CD4-positive, alpha-beta T cell (primary cell): ENCODE measurements at regions of chr10 and their contacts with region 1.

Region 1: DNA sequence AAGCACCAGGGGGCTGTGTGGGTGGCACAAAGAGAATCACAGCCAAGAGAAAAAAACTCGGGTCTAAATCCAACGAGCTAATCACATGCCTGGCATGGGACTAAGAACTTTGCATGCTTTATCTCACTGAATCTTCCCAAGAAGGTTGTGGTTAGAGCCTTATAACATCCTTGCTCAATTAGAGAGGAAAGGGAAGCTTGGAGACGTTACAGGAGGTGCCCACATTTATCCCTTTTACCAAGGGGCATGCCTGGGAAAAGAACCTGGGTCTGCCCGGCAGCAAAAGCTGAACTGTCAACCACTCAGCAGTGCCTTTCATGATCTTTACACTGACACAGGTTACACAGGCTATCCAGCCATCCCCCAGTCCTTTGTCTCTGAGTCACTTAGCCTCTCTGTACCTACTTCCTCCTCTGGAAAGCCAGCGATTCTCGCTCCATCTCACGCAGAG is 190.1 kb downstream of the PRPF18 start:
- DNase-seq: peak in 1 of 14 experiments; percentile 28
- ATAC-seq: no peak
- H3K4me3 ChIP-seq: no peak overlapping the region
- H3K4me3 Mint-ChIP-seq: no peak overlapping the region
- H3K27ac ChIP-seq: no peak overlapping the region
- H3K27ac Mint-ChIP-seq: no peak overlapping the region
- H3K4me1 ChIP-seq: peaks cover 2% of the 10 kb centered on the region
- H3K4me1 Mint-ChIP-seq: no peaks in the 10 kb centered on the region
- H3K27me3 ChIP-seq: peaks cover 0 to 3% of the 10 kb centered on the region in 2 experiments
- H3K27me3 Mint-ChIP-seq: peaks cover 19% of the 10 kb centered on the region
- CTCF ChIP-seq: no peak

Region 2: DNA sequence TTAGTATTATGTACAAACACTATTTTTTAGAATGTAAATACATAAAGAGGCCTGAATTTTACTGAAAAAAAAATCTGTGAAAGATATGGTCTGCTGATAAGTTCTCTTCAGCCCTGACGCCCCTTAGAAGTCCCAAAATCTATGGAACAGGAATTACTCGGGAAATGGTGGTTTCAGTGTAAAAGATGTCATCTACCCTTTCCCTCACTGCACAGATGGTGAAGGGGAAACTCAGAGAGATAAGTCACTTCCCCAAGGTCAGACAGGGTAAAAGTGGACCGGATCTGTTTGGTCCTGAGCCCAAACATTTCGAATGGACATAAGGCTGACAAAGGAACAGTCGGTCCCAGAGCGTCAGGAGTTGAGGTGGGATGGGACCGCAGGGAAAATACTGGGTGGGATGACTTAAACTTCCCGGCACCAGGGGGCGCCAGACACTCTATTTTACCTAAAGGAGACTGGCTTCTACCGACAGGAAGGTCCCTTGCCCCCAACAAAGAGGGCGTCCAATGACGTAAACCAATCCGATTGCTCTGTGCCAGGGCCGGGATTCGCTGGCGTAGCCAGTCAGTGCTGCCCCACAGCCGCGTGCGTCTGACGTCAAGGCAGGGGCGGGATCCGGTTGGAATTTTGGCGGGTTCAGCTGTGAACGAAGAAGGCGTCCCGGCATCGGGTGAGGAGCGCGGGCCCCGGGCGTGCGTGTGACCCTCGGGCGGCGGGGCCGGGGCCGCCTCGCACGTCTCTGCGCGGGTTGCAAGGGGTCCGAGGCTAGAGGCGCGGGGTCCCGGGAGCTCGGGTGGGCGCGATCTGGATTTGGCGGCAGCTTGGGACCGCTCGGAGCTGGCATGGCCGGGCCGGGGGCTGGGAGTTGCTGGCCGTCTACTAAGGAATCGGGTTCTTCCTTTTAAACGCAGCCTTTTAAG is 615.7 kb before region 1 on chr10 and contains the start of gene MCM10:
- CTCF ChIA-PET with region 1: no interaction called
- POLR2A ChIA-PET with region 1: no interaction called
- intact Hi-C with region 1: loop called in 1 of 2 experiments (anchors 5 kb)
- DNase-seq: peak; percentile 93 to 99 (median 96)
- ATAC-seq: peak; percentile 100
- H3K4me3 ChIP-seq: peak within 1 kb of the TSS; percentile 53
- H3K4me3 Mint-ChIP-seq: peak within 1 kb of the TSS; percentile 91
- H3K27ac ChIP-seq: peak within 1 kb of the TSS in 1 of 2 donors; percentile 24
- H3K27ac Mint-ChIP-seq: peak within 1 kb of the TSS; percentile 72
- H3K4me1 ChIP-seq: peaks cover 12% of the 10 kb centered on the region
- H3K4me1 Mint-ChIP-seq: peaks cover 16% of the 10 kb centered on the region
- H3K27me3 ChIP-seq: no peaks in the 10 kb centered on the region
- H3K27me3 Mint-ChIP-seq: no peaks in the 10 kb centered on the region
- CTCF ChIP-seq: peak; percentile 94
- total RNA-seq, gene MCM10: 0.16 to 0.50 TPM

Region 3: DNA sequence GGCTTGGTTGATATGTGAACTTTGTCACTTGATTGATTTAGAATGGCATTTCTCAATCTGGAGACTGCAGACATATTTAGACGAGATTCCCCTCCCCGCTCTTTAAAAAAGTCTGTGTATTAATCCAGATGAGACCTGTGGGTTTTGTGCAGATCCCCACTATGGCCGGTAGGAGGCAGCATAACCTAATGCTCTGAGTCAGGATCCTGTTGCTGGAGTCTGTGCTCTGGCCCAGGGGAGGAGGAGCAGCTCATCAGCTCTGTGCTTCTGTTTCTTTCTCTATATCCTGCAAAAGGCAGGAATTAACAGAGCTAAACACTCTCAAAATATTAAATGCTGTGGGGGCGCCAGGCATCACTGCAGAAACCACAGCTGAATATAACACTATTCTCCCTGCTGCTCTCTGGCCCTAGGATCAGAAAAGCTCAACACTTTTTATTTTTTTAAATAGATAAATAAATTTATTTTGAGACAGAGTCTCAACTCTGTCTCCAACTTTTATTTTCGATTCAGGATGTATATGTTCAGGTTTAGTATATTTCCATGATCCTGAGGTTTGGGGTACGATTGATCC is 404.9 kb before region 1 on chr10:
- CTCF ChIA-PET with region 1: interaction called, 4 read pairs
- POLR2A ChIA-PET with region 1: no interaction called
- intact Hi-C with region 1: loop called (anchors 1 kb)
- DNase-seq: peak; percentile 18 to 88 (median 56)
- ATAC-seq: peak; percentile 100
- H3K4me3 ChIP-seq: no peak overlapping the region
- H3K4me3 Mint-ChIP-seq: no peak overlapping the region
- H3K27ac ChIP-seq: no peak overlapping the region
- H3K27ac Mint-ChIP-seq: no peak overlapping the region
- H3K4me1 ChIP-seq: no peaks in the 10 kb centered on the region
- H3K4me1 Mint-ChIP-seq: peaks cover 6% of the 10 kb centered on the region
- H3K27me3 ChIP-seq: no peaks in the 10 kb centered on the region
- H3K27me3 Mint-ChIP-seq: peaks cover 3% of the 10 kb centered on the region
- CTCF ChIP-seq: peak; percentile 79

Region 4: DNA sequence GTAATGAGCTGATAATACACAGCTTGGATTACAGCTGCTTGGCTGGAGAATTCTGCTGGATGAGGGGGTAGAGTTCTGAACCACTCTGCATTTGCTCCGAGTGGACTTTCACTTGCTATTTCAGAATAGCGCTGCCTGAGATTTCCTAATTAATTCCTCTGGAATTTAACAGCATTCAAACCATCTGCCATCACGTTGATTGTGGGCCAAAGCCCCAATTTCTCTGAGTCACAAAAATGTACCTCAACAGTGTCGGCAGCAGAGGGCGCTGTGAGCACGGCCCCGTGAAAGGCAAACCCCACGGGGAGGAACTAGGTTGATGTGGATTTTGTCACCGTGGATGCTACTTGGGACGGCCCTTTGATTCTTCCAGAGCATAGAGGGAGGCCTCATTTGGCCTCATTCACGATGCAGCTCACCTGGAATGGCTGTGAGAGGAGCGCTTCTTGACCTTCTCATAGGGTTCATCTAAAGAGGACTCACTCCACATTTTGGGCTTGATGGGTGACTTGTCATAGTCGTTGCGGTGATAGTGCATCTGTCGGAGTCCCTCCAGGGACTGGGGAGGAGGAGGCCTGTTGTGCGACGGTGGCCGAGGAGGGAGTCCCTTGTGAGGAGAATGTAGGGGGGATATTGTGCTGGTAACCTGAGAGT is 116.9 kb before region 1 on chr10:
- CTCF ChIA-PET with region 1: no interaction called
- POLR2A ChIA-PET with region 1: no interaction called
- intact Hi-C with region 1: loop called (anchors 1 kb)
- DNase-seq: peak; percentile 52 to 81 (median 65)
- ATAC-seq: peak; percentile 82
- H3K4me3 ChIP-seq: no peak overlapping the region
- H3K4me3 Mint-ChIP-seq: no peak overlapping the region
- H3K27ac ChIP-seq: no peak overlapping the region
- H3K27ac Mint-ChIP-seq: no peak overlapping the region
- H3K4me1 ChIP-seq: peaks cover 23% of the 10 kb centered on the region
- H3K4me1 Mint-ChIP-seq: peaks cover 11% of the 10 kb centered on the region
- H3K27me3 ChIP-seq: no peaks in the 10 kb centered on the region
- H3K27me3 Mint-ChIP-seq: no peaks in the 10 kb centered on the region
- CTCF ChIP-seq: peak; percentile 89